ENCODE measurements at regions of chr3 and their contacts with region 1.

Region 1: GRCh38 chr3:4350789-4351163 is 47.6 kb downstream of the SETMAR start:
- DNase-seq: peak; percentile 73
- ATAC-seq: peak; percentile 74
- H3K4me3 ChIP-seq: peak overlapping the region in 4 of 5 experiments; percentile 7 to 54 (median 47)
- H3K4me3 Mint-ChIP-seq: peak overlapping the region; percentile 62
- H3K27ac ChIP-seq: no peak overlapping the region
- H3K27ac Mint-ChIP-seq: no peak overlapping the region
- H3K4me1 ChIP-seq: peaks cover 4 to 6% of the 10 kb centered on the region in 2 donors
- H3K4me1 Mint-ChIP-seq: peaks cover 9% of the 10 kb centered on the region
- H3K27me3 ChIP-seq: no peaks in the 10 kb centered on the region
- H3K27me3 Mint-ChIP-seq: no peaks in the 10 kb centered on the region
- CTCF ChIP-seq: peak; percentile 89

Region 2: GRCh38 chr3:4271834-4272233 is 78.9 kb before region 1 on chr3:
- CTCF ChIA-PET with region 1: no interaction called
- POLR2A ChIA-PET with region 1: no interaction called
- intact Hi-C with region 1: no loop called
- DNase-seq: peak; percentile 58
- ATAC-seq: no peak
- H3K4me3 ChIP-seq: no peak overlapping the region
- H3K4me3 Mint-ChIP-seq: peak overlapping the region; percentile 21
- H3K27ac ChIP-seq: no peak overlapping the region
- H3K27ac Mint-ChIP-seq: no peak overlapping the region
- H3K4me1 ChIP-seq: peaks cover 14 to 20% of the 10 kb centered on the region in 2 donors
- H3K4me1 Mint-ChIP-seq: peaks cover 25% of the 10 kb centered on the region
- H3K27me3 ChIP-seq: no peaks in the 10 kb centered on the region
- H3K27me3 Mint-ChIP-seq: no peaks in the 10 kb centered on the region
- CTCF ChIP-seq: peak; percentile 83

Region 3: GRCh38 chr3:4373669-4374068 is 22.9 kb after region 1 on chr3:
- CTCF ChIA-PET with region 1: interaction called, 15 read pairs
- POLR2A ChIA-PET with region 1: no interaction called
- intact Hi-C with region 1: no loop called
- DNase-seq: no peak
- ATAC-seq: no peak
- H3K4me3 ChIP-seq: no peak overlapping the region
- H3K4me3 Mint-ChIP-seq: no peak overlapping the region
- H3K27ac ChIP-seq: no peak overlapping the region
- H3K27ac Mint-ChIP-seq: no peak overlapping the region
- H3K4me1 ChIP-seq: no peaks in the 10 kb centered on the region
- H3K4me1 Mint-ChIP-seq: no peaks in the 10 kb centered on the region
- H3K27me3 ChIP-seq: no peaks in the 10 kb centered on the region
- H3K27me3 Mint-ChIP-seq: no peaks in the 10 kb centered on the region
- CTCF ChIP-seq: no peak

Region 4: GRCh38 chr3:4571690-4572334 is 221.0 kb after region 1 on chr3:
- CTCF ChIA-PET with region 1: interaction called, 32 read pairs
- POLR2A ChIA-PET with region 1: no interaction called
- intact Hi-C with region 1: loop called (anchors 2 kb)
- DNase-seq: peak; percentile 26
- ATAC-seq: peak; percentile 33
- H3K4me3 ChIP-seq: no peak overlapping the region
- H3K4me3 Mint-ChIP-seq: no peak overlapping the region
- H3K27ac ChIP-seq: peak overlapping the region in 1 of 2 donors; percentile 39
- H3K27ac Mint-ChIP-seq: peak overlapping the region; percentile 23
- H3K4me1 ChIP-seq: peaks cover 0 to 11% of the 10 kb centered on the region in 2 donors
- H3K4me1 Mint-ChIP-seq: peaks cover 69% of the 10 kb centered on the region
- H3K27me3 ChIP-seq: no peaks in the 10 kb centered on the region
- H3K27me3 Mint-ChIP-seq: no peaks in the 10 kb centered on the region
- CTCF ChIP-seq: peak; percentile 36

Region 5: GRCh38 chr3:4633078-4634004 is 282.6 kb after region 1 on chr3:
- CTCF ChIA-PET with region 1: interaction called, 279 read pairs
- POLR2A ChIA-PET with region 1: no interaction called
- intact Hi-C with region 1: loop called (anchors 1 kb)
- DNase-seq: peak; percentile 64
- ATAC-seq: peak; percentile 43
- H3K4me3 ChIP-seq: no peak overlapping the region
- H3K4me3 Mint-ChIP-seq: no peak overlapping the region
- H3K27ac ChIP-seq: peak overlapping the region in 1 of 2 donors; percentile 26
- H3K27ac Mint-ChIP-seq: peak overlapping the region; percentile 78
- H3K4me1 ChIP-seq: no peaks in the 10 kb centered on the region
- H3K4me1 Mint-ChIP-seq: peaks cover 13% of the 10 kb centered on the region
- H3K27me3 ChIP-seq: no peaks in the 10 kb centered on the region
- H3K27me3 Mint-ChIP-seq: no peaks in the 10 kb centered on the region
- CTCF ChIP-seq: peak; percentile 91

Region 6: GRCh38 chr3:5057857-5058324 is 707.1 kb after region 1 on chr3:
- CTCF ChIA-PET with region 1: interaction called, 3 read pairs
- POLR2A ChIA-PET with region 1: no interaction called
- intact Hi-C with region 1: loop called (anchors 5 kb)
- DNase-seq: peak; percentile 86
- ATAC-seq: peak; percentile 89
- H3K4me3 ChIP-seq: no peak overlapping the region
- H3K4me3 Mint-ChIP-seq: no peak overlapping the region
- H3K27ac ChIP-seq: no peak overlapping the region
- H3K27ac Mint-ChIP-seq: no peak overlapping the region
- H3K4me1 ChIP-seq: peaks cover 37 to 44% of the 10 kb centered on the region in 2 donors
- H3K4me1 Mint-ChIP-seq: peaks cover 36% of the 10 kb centered on the region
- H3K27me3 ChIP-seq: peaks cover 0 to 4% (median 0%) of the 10 kb centered on the region in 4 experiments
- H3K27me3 Mint-ChIP-seq: peaks cover 7% of the 10 kb centered on the region
- CTCF ChIP-seq: peak; percentile 82

Measured in B cell (primary cell).